HAP-1 (cell line): ENCODE measurements at regions of chr11 and their contacts with region 1.

Region 1: GRCh38 chr11:12893787-12894672 is 115.1 kb upstream of the RASSF10 start:
- DNase-seq: peak; percentile 81 to 84
- H3K4me3 ChIP-seq: no peak overlapping the region
- H3K4me1 ChIP-seq: peaks cover 8% of the 10 kb centered on the region
- H3K27me3 ChIP-seq: no peaks in the 10 kb centered on the region

Region 2: GRCh38 chr11:12411806-12412727 is 482.0 kb before region 1 on chr11:
- in situ Hi-C with region 1: loop called (anchors 5 kb)
- DNase-seq: peak; percentile 63 to 88
- H3K4me3 ChIP-seq: no peak overlapping the region
- H3K4me1 ChIP-seq: no peaks in the 10 kb centered on the region
- H3K27me3 ChIP-seq: no peaks in the 10 kb centered on the region

Region 3: GRCh38 chr11:12599408-12600143 is 294.5 kb before region 1 on chr11:
- in situ Hi-C with region 1: loop called (anchors 10 kb)
- DNase-seq: peak; percentile 47 to 81
- H3K4me3 ChIP-seq: no peak overlapping the region
- H3K4me1 ChIP-seq: peaks cover 7% of the 10 kb centered on the region
- H3K27me3 ChIP-seq: no peaks in the 10 kb centered on the region; the same call in 1 of the 2 replicates